Psoas muscle (tissue), 8 donors: ENCODE measurements at regions of chr18 and their contacts with region 1.

Region 1: GRCh38 chr18:47748847-47749599 is 181.4 kb downstream of the SMAD2 start:
- DNase-seq: peak; percentile 81 to 88
- ATAC-seq: peak; percentile 97 to 99 (median 98)
- H3K4me3 ChIP-seq: peak overlapping the region; percentile 54
- H3K27ac ChIP-seq: no peak overlapping the region
- H3K4me1 ChIP-seq: no peaks in the 10 kb centered on the region
- H3K27me3 ChIP-seq: peaks cover 0 to under 1% (median 0%) of the 10 kb centered on the region in 3 donors
- CTCF ChIP-seq: peak; percentile 100

Region 2: GRCh38 chr18:47215554-47216138 is 533.4 kb before region 1 on chr18:
- intact Hi-C with region 1: loop called (anchors 2 to 10 kb)
- DNase-seq: no peak
- ATAC-seq: no peak
- H3K4me3 ChIP-seq: no peak overlapping the region
- H3K27ac ChIP-seq: no peak overlapping the region
- H3K4me1 ChIP-seq: no peaks in the 10 kb centered on the region
- H3K27me3 ChIP-seq: peaks cover 0 to 12% (median 8%) of the 10 kb centered on the region in 3 donors
- CTCF ChIP-seq: peak; percentile 48

Region 3: DNA sequence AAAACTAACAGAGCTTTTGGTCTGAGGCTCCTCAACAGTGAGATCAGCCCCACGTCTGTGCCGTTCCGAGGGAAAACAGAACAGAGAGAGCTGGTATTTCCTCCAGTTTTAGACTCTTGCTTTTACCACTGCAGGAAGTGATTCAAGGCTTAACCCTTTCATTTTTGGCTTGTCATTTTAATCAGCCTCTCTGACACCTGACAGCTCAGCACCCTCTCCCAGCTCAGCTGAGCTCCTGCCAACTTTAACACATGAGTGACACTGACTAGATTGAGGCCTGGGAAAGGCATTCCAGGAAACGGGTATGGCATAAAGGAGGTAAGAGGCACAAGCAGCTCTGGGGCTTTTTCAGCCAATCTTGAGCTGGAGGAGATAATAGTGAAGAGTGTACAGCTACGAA is 258.1 kb before region 1 on chr18:
- intact Hi-C with region 1: no loop called
- DNase-seq: no peak
- ATAC-seq: no peak
- H3K4me3 ChIP-seq: no peak overlapping the region
- H3K27ac ChIP-seq: no peak overlapping the region
- H3K4me1 ChIP-seq: no peaks in the 10 kb centered on the region
- H3K27me3 ChIP-seq: no peaks in the 10 kb centered on the region
- CTCF ChIP-seq: no peak

Region 4: DNA sequence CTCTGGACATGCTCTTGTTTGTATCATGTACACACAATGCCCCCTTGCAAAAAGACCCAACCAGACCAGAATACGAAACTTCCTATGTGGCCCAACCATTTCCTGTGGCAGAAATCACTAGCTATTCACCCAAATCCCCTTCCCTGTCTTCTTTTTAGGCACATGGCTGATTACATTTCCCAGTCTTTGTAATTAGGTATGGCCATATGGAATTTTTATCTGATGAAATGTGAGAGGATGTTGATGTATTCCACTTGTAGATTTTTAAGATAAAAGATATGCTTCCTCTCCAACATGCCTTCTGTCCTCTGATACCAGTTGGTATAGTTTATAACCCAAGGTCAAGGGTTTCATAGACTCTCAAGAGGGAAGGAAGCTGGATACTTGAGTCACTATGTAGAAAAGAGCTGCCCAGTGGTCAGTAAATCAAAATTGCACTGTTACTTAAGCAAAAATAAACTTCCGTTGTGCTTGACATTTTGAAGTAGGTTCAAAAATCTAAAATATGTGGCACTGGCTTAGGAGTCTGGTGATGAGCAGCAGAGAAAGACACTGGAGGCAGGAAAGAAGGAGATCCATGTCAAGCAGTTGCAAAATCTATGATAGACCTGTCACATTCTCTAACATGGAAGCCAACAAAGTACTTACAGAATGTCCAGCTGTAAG is 115.9 kb before region 1 on chr18:
- intact Hi-C with region 1: no loop called
- DNase-seq: no peak
- ATAC-seq: no peak
- H3K4me3 ChIP-seq: no peak overlapping the region
- H3K27ac ChIP-seq: no peak overlapping the region
- H3K4me1 ChIP-seq: no peaks in the 10 kb centered on the region
- H3K27me3 ChIP-seq: peaks cover 0 to 12% (median 5%) of the 10 kb centered on the region in 3 donors
- CTCF ChIP-seq: no peak

Region 5: DNA sequence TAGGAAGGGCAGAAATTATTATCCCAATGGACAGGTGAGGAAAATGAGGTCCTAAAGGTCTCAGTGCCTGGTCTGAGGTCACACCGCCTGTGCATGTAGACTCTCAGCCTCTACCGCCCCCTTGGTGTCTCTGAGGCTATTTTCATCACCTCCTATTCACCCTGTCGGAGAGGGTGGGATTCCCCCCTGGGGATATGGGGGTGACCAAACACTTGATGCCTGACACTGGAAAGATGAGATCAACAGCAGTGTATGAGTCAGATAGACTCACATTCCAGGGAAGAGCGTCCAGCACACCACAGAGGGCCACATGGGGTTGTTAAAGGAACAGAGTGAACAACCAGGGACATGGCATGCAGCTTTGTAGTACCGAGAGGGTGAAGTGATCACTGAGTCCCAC is 18.2 kb before region 1 on chr18:
- intact Hi-C with region 1: no loop called
- DNase-seq: no peak
- ATAC-seq: no peak
- H3K4me3 ChIP-seq: no peak overlapping the region
- H3K27ac ChIP-seq: no peak overlapping the region
- H3K4me1 ChIP-seq: no peaks in the 10 kb centered on the region
- H3K27me3 ChIP-seq: peaks cover 0 to 43% (median 6%) of the 10 kb centered on the region in 3 donors
- CTCF ChIP-seq: no peak

Region 6: GRCh38 chr18:47795434-47795814 is 46.4 kb after region 1 on chr18:
- intact Hi-C with region 1: no loop called
- DNase-seq: no peak
- ATAC-seq: no peak
- H3K4me3 ChIP-seq: no peak overlapping the region
- H3K27ac ChIP-seq: no peak overlapping the region
- H3K4me1 ChIP-seq: no peaks in the 10 kb centered on the region
- H3K27me3 ChIP-seq: peaks cover 0 to 2% (median 0%) of the 10 kb centered on the region in 3 donors
- CTCF ChIP-seq: no peak